Posterior vena cava (tissue), 2 donors: ENCODE measurements at regions of chr15 and their contacts with region 1.

Region 1: GRCh38 chr15:79380755-79381497 is 51.2 kb upstream of the MINAR1 start:
- DNase-seq: peak; percentile 94

Region 2: DNA sequence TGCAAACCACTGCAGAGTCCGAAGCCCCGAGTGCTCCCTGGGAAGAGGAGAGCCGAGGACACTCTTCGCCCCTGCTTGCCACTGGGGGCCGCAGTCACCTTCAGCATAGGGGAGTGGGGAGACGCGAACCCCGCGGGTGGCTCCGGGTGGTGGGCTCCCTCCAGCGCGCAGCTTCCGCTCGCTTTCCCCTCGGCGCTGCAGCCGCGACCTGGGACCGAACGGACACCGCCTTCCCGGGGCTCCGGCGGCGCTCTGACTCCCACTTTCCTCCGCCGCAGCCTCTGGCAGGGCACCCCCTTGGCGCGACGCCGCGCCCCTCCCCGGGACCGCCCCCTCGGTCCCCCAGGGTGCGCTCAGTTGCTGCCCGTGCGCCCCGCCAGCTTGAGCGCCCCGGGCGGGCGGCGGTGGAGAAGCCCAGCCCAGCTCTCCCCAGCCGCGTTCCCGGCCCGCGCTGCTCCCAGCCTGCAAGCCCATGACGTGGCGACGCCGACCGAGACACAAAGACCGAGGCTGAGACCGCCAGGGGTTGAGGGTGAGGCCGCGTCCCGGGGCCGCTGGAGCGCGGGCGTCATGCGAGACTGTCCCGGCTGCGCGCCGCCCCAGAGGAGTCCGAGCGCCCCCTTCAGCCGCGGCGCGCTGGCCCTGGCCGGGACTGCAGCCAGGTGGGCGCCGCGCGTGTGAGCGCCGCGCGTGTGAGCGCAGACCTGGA is 50.9 kb after region 1 on chr15 and contains the start of gene MINAR1:
- intact Hi-C with region 1: no loop called
- DNase-seq: peak; percentile 85
- total RNA-seq, gene MINAR1: 0.69 to 0.76 TPM

Region 3: DNA sequence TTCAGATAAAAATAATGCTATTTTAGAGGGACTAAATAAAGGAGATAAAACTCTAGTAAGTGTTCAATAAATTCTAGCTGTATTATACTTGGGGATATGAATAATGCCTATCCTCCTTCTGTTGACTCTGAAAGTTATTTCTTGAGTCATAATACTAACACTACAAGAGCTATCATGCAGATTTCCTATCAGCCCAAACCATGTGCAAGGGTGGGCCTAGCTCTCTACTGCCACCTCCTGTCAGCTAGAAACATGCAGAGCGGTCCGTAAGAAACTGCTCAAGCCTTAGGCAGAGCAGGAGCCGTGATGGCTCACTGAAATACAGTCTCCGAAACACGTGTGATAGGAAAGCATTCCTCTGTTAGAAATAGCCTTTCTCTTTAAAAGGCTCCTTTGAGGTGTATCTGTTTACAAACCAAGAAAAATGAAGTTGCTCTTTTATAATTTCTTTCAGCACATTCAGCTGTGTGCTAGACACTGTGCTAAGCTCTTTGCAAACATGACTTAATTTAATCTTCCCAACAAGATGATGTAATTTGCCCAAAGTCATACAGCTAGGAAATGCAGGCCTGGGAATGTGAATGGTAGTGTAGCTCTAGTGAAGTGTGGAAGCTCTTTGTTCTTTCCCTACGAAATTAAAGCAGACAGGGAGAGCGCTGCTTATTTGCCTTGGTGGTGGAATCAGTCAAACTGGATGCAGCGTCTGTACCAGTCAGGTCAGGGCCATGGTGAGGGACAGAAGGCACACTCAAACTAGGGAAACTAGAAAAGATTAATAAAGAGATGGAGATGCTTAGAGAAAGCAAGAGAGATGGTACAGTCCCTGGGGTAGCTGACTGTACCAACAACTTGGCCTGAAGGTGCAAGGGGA is 472.8 kb after region 1 on chr15:
- intact Hi-C with region 1: loop called (anchors 5 to 10 kb)
- DNase-seq: peak; percentile 79